ENCODE measurements at regions of chr12 and their contacts with region 1.

Region 1: DNA sequence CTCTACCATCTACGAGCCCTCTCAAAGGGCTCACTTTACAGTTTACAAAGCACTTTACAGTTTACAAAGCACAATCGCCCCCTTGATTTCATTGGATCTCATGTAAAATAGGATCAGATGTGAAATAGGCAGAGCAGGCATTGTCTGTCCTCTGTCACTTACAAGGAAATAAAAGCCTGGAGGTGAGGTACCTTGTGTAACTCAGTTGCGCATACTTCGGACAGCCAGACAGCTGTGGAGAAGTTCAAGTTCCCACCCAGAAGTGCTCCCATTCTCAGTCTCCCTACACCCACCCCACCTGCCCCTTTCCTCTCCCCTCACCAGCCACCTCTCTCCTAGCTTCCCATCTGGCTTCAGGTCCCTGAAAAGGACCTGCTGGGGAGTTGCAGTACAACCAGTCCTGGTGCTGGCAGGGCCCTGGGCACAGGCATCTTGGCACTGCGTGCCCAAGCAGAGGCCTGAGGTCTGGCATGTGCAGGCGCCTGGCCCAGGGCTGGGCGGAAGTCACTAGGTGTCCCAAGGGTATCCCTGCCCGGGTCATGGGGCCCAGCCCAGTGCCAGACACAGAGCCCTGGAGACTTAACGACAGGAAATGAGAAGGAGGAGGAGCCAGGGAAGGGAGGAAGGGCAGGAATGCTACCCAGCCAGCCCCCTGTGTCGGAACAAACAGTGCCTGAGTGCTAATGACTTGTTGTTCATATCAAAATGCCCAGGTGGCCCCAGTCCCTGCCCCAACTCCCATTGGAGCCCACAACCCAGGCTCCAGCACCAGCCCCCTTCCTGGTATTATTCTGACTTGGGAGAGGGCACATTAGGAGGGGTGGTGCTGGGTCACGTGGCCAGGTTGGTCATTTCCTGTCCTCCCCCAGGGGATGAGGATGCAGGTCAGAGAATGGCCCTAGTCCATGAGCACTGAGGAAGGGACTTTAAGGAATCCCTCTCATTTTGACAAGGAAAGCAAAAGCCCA is 5.4 kb downstream of the RAPGEF3 start:
- DNase-seq: no peak
- H3K4me3 ChIP-seq: no peak overlapping the region
- H3K27me3 ChIP-seq: no peaks in the 10 kb centered on the region
- CTCF ChIP-seq: no peak

Region 2: GRCh38 chr12:47767216-47767724 is 14.0 kb after region 1 on chr12:
- CTCF ChIA-PET with region 1: interaction called, 454 read pairs
- POLR2A ChIA-PET with region 1: no interaction called
- DNase-seq: no peak
- H3K4me3 ChIP-seq: no peak overlapping the region
- H3K27me3 ChIP-seq: no peaks in the 10 kb centered on the region; the same call in 1 of the 2 replicates
- CTCF ChIP-seq: peak; percentile 59

Region 3: DNA sequence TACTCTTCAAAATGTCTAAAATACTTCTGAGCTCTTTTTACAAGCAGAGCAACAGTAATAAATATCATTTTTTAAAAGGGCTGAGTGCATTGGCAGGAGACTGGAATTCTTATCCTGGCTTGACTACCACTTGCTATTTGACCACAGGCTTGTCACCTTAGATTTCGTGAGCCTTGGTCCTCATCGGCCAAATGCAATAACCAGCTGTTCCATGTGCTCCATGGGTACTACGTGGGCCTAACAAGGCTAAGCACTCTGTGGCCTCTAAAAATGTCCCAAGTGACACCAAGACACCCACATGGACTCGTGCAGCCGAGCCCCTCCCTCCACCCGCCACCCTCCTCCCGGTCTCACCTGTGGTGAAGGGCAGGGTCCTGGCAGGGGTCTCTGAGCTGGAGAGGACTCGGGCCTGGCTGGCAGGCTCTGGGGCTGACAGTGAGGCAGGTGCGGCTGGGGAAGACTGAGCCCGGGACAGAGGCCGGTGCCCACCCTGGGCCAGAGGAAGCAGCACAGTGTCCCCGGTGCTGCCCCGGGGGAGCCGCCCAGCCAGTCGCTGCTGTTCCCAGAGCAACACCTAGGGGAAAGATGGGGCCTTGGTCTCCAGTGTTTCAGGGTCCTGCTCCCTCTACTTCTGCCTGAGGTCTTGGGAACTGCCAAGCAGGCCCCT is 39.8 kb after region 1 on chr12:
- CTCF ChIA-PET with region 1: no interaction called
- POLR2A ChIA-PET with region 1: no interaction called
- DNase-seq: no peak
- H3K4me3 ChIP-seq: no peak overlapping the region
- H3K27me3 ChIP-seq: no peaks in the 10 kb centered on the region
- CTCF ChIP-seq: no peak

Measured in BJ (cell line).